Naive thymus-derived CD4-positive, alpha-beta T cell (primary cell): ENCODE measurements at regions of chr12 and their contacts with region 1.

Region 1: DNA sequence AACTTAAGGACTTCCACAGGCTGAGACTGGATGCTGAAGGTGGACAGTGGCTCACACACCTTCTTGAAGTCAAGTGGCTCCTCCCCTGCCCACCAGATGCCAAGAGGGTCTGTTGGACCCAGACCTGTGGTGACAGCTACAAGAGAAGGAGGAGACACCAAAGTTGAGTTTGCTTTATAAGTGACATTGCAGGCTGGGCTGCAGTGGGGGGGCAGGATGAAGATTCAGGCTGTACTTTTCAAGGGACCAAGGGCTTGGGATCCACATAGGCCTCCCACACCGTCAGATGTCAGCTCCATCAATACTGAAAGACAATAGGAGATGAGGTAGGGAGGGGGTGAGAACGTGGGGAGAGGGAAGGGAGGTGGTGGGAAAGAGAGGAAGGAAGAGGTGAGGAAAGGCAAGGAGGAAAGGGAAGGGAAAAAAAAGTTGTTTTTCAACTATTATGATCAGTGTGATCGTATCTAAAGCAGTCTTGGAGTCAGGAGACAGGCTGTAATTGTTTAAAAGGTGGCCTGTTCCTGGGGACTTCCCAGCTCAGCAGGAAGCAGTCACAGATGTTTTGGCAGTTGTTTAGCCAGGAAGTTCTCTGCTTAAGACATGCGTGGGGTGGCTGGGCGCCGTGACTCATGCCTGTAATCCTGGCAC is 84.1 kb upstream of the RESF1 start:
- DNase-seq: peak; percentile 17 to 84 (median 63)
- ATAC-seq: peak; percentile 96
- H3K4me3 ChIP-seq: no peak overlapping the region
- H3K4me3 Mint-ChIP-seq: peak overlapping the region; percentile 53 to 84 (median 72)
- H3K27ac ChIP-seq: peak overlapping the region; percentile 90
- H3K27ac Mint-ChIP-seq: peak overlapping the region; percentile 95 to 100 (median 98)
- H3K4me1 ChIP-seq: peaks cover 12 to 29% of the 10 kb centered on the region in 2 donors
- H3K4me1 Mint-ChIP-seq: peaks cover 29 to 66% (median 55%) of the 10 kb centered on the region in 7 donors
- H3K27me3 ChIP-seq: no peaks in the 10 kb centered on the region
- H3K27me3 Mint-ChIP-seq: no peaks in the 10 kb centered on the region

Region 2: GRCh38 chr12:31843398-31844095 is 31.5 kb before region 1 on chr12:
- CTCF ChIA-PET with region 1: no interaction called
- POLR2A ChIA-PET with region 1: no interaction called
- intact Hi-C with region 1: no loop called
- DNase-seq: no peak
- ATAC-seq: no peak
- H3K4me3 ChIP-seq: no peak overlapping the region
- H3K4me3 Mint-ChIP-seq: no peak overlapping the region
- H3K27ac ChIP-seq: no peak overlapping the region
- H3K27ac Mint-ChIP-seq: peak overlapping the region in 2 of 9 donors; percentile 30 to 46
- H3K4me1 ChIP-seq: no peaks in the 10 kb centered on the region
- H3K4me1 Mint-ChIP-seq: peaks cover 0 to 25% (median 14%) of the 10 kb centered on the region in 7 donors
- H3K27me3 ChIP-seq: no peaks in the 10 kb centered on the region
- H3K27me3 Mint-ChIP-seq: no peaks in the 10 kb centered on the region

Region 3: DNA sequence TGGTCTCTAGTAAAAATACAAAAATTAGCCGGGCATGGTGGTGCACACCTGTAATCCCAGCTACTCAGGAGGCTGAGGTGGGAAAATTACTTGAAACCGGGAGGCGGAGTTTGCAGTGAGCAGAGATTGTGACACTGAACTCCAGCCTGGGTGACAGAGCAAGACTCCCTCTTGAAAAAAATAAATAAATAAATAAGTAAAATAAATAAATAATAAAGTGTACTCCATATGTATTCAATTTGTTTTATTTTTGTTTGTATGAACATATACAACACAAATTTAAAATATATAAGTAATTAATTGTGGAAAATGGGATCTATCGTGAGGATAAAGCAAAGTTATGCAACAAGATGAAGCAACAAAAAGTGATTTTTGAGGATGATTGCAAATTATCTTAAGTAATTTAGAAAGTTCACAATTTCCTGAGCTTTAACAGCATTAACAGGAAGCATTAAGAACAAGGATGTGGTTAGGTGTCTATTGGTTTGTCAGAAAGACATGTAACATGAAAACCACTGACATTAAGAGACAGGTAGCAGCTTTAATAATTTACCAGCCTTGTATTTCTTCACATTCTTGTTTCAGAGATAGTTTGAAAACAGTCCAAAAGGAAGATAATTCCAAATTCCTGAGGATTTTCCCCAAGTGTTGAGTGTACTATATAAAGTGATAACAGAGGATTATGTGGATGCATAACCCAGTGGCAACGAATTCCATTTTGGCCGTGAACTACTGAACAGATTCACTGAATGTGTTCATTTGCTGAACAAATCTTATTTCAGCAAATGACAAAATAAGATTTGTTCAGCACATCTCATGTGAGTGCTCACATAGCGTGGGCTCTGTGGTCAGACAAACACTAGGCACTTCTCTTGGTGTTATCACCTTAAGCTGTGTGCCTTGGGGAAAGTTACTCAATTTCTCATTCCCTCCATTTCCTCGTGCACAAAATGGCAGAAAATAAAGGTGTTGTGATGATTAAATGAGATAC is 15.5 kb after region 1 on chr12:
- CTCF ChIA-PET with region 1: interaction called, 4 read pairs
- POLR2A ChIA-PET with region 1: interaction called, 22 read pairs
- intact Hi-C with region 1: no loop called
- DNase-seq: peak in 7 of 9 donors; percentile 30 to 77 (median 74)
- ATAC-seq: peak; percentile 87
- H3K4me3 ChIP-seq: peak overlapping the region; percentile 2
- H3K4me3 Mint-ChIP-seq: peak overlapping the region; percentile 51 to 82 (median 72)
- H3K27ac ChIP-seq: peak overlapping the region; percentile 56
- H3K27ac Mint-ChIP-seq: peak overlapping the region; percentile 83 to 98 (median 90)
- H3K4me1 ChIP-seq: peaks cover 40 to 66% of the 10 kb centered on the region in 2 donors
- H3K4me1 Mint-ChIP-seq: peaks cover 22 to 80% (median 60%) of the 10 kb centered on the region in 7 donors
- H3K27me3 ChIP-seq: no peaks in the 10 kb centered on the region
- H3K27me3 Mint-ChIP-seq: no peaks in the 10 kb centered on the region